ENCODE measurements at regions of chr12 and their contacts with region 1.

Region 1: GRCh38 chr12:6367065-6367968 is 8.0 kb downstream of the SCNN1A start:
- DNase-seq: peak; percentile 67
- ATAC-seq: peak; percentile 62
- H3K4me3 Mint-ChIP-seq: no peak overlapping the region
- H3K27ac Mint-ChIP-seq: peak overlapping the region; percentile 68
- H3K4me1 Mint-ChIP-seq: peaks cover 26% of the 10 kb centered on the region
- H3K27me3 Mint-ChIP-seq: no peaks in the 10 kb centered on the region

Region 2: GRCh38 chr12:6323340-6323994 is 43.9 kb before region 1 on chr12:
- CTCF ChIA-PET with region 1: interaction called, 21 read pairs
- DNase-seq: peak; percentile 65
- ATAC-seq: peak; percentile 83
- H3K4me3 Mint-ChIP-seq: peak overlapping the region; percentile 56
- H3K27ac Mint-ChIP-seq: peak overlapping the region; percentile 92
- H3K4me1 Mint-ChIP-seq: peaks cover 43% of the 10 kb centered on the region
- H3K27me3 Mint-ChIP-seq: no peaks in the 10 kb centered on the region

Measured in activated CD8-positive, alpha-beta memory T cell treated with anti-CD3 and anti-CD28 coated beads, Interleukin-2, amount 10 ng/mL, durations not matched to agents 7 days and 5 days (primary cell).